ENCODE measurements at regions of chr14 and their contacts with region 1.

Region 1: GRCh38 chr14:53539489-53540126 is 386.5 kb upstream of the DDHD1 start:
- DNase-seq: peak; percentile 71
- ATAC-seq: peak; percentile 95

Region 2: GRCh38 chr14:53247596-53248370 is 291.8 kb before region 1 on chr14:
- intact Hi-C with region 1: no loop called
- DNase-seq: no peak
- ATAC-seq: no peak

Region 3: DNA sequence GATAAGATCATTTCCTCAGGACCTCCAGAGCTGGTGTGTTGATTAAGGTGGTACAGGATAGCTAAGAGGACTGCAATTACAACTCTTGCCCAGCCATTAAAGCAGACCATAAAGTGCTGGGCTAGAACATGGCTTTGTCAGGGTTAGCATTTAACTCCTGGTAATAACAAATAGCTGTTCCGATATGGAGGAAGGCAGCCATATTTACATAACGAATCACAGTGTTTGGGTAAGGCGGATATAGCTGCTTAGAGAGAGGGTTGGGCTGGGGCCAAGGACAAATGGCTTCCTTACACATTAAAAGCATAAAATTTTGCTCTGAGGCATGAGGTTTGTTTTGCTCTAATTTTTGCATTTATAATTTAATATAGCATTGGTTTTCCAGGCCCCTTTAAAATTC is 88.7 kb before region 1 on chr14:
- intact Hi-C with region 1: no loop called
- DNase-seq: no peak
- ATAC-seq: no peak

Region 4: GRCh38 chr14:53953002-53953827 is 413.6 kb after region 1 on chr14:
- intact Hi-C with region 1: loop called (anchors 10 kb)
- DNase-seq: peak; percentile 90
- ATAC-seq: peak; percentile 90

Region 5: DNA sequence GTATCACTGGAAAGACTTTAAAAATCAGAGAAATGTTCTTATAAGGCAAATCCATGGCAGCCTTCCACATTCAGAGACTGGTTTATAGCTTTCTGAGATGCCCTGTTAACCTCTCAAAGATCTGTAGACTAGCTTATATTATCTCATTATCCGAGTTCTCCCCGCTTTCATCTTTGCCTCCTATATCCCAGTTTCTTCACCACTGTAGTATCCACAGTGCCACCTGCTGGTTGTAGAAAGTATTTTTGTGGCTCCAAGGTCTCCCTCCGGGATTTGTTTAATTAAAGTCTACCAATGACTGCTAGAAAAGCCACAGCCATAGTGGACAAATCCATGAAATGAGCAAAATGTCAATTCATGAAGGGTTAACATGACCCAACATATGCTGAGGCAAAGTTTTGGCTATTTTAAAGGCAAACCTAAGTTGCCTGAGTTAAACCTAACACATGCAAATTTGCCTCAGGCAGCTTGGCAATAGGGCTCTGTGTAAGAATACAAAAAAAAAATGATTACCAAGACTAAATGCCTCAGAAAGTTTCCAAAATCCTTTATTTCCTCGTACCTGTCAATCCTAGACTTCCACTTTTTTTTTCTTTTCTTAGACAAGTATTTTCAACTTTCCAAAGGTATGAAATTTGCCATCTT is 635.8 kb after region 1 on chr14:
- intact Hi-C with region 1: loop called (anchors 5 kb)
- DNase-seq: no peak
- ATAC-seq: peak; percentile 81

Region 6: DNA sequence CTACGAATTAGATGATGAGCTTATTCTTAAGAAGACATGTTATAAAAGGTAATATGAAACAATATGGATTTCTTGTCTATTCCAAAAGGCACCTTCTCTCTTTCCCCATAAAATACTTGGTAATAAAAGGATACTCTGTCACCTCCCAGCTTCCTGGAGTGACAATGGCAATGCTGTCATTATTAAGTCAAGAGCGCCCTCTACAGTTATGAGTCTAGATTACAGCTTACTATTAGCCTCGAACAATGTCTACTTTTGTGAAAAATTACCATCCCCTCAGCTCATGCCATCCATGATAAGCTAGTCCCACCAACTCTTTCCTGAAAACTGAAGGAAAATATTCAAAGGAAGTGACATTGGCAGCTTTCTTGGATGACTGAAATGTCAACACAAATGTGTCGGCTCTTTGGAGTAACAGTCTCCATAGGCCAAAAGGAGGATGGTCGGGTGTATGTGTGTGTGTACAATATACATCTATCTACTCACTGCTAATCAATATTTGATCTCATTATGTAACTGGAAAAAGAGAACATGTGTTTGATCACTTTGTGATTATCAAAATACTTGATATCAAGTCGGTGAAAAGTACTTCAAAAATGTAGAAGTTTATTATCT is 808.5 kb after region 1 on chr14:
- intact Hi-C with region 1: loop called (anchors 2 kb)
- DNase-seq: no peak
- ATAC-seq: peak; percentile 75

Measured in Right ventricle myocardium superior (tissue), 1 donor.